MCF 10A (cell line): ENCODE measurements at regions of chr10 and their contacts with region 1.

Region 1: GRCh38 chr10:72260588-72261322 is 13.0 kb upstream of the DDIT4 start:
- DNase-seq: peak; percentile 99
- H3K4me3 Mint-ChIP-seq: peak overlapping the region; percentile 53
- H3K27ac Mint-ChIP-seq: peak overlapping the region; percentile 87
- H3K4me1 Mint-ChIP-seq: peaks cover 46% of the 10 kb centered on the region
- H3K27me3 Mint-ChIP-seq: no peaks in the 10 kb centered on the region
- CTCF ChIP-seq: no peak

Region 2: GRCh38 chr10:72229261-72230251 is 31.2 kb before region 1 on chr10:
- CTCF ChIA-PET with region 1: interaction called, 4 read pairs
- POLR2A ChIA-PET with region 1: interaction called, 23 read pairs
- intact Hi-C with region 1: no loop called
- DNase-seq: peak; percentile 91
- H3K4me3 Mint-ChIP-seq: no peak overlapping the region
- H3K27ac Mint-ChIP-seq: peak overlapping the region; percentile 68
- H3K4me1 Mint-ChIP-seq: peaks cover 25% of the 10 kb centered on the region
- H3K27me3 Mint-ChIP-seq: no peaks in the 10 kb centered on the region
- CTCF ChIP-seq: no peak

Region 3: GRCh38 chr10:72794260-72794659 is 533.5 kb after region 1 on chr10:
- CTCF ChIA-PET with region 1: no interaction called
- POLR2A ChIA-PET with region 1: no interaction called
- intact Hi-C with region 1: no loop called
- DNase-seq: peak; percentile 28
- H3K4me3 Mint-ChIP-seq: no peak overlapping the region
- H3K27ac Mint-ChIP-seq: peak overlapping the region; percentile 31
- H3K4me1 Mint-ChIP-seq: peaks cover 15% of the 10 kb centered on the region
- H3K27me3 Mint-ChIP-seq: no peaks in the 10 kb centered on the region
- CTCF ChIP-seq: no peak